GM12878 (cell line): ENCODE measurements at regions of chr20 and their contacts with region 1.

Region 1: DNA sequence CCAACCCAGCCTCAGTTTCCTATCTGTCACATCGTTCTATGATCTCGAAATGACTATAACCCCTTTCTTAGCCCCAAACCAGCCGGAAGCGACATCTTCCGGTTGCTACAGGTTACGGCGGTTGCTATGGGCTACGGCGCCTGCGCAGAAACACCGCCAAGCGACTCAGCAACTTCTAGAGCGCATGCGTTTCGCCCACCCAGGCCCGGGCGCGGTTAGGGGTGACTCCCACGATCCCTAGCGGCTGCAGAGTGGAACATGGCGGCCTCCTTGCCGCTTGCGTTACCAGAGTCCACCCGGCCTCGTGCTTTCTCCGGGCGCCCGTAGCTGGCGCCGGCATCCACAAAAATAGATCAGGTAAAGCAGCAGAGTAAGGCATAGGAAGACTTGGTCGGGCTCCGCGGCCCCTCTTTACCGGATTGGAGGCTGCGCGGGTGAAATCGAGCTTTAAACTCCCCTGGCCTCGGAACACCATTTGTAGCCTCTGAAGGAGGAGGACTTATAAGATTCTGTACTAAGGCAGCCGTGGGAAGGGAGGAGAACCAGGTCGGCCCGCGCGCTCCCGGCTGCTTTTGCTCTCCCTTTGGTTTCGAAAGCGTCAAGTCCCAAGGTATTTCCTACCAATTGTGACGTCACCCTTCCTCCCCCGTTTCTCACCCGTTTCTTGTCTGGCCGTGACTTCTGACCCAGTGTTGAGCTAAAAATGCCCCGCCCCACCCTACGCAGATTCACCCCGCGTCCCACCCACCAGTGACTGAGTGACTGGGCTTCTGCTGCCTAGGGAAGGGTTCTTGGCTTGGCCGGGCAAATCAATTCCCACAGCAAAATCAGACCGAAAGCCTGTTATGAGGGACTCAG is 3.5 kb downstream of the SDCBP2 start:
- DNase-seq: peak; percentile 88
- ATAC-seq: peak; percentile 89
- H3K4me3 ChIP-seq: peak overlapping the region; percentile 90
- H3K27ac ChIP-seq: peak overlapping the region; percentile 94
- H3K4me1 ChIP-seq: peaks cover 34% of the 10 kb centered on the region
- H3K27me3 ChIP-seq: no peaks in the 10 kb centered on the region
- CTCF ChIP-seq: no peak
- EP300 ChIP-seq: peak in 1 of 2 experiments; percentile 74; a peak in 1 of 4 replicates
- POLR2A ChIP-seq: peak; percentile 97
- RAD21 ChIP-seq: no peak

Region 2: GRCh38 chr20:1255675-1256074 is 69.7 kb before region 1 on chr20:
- CTCF ChIA-PET with region 1: no interaction called
- POLR2A ChIA-PET with region 1: no interaction called
- RAD21 ChIA-PET with region 1: no interaction called
- SMC1A ChIA-PET with region 1: no interaction called
- in situ Hi-C with region 1: no loop called
- intact Hi-C with region 1: no loop called
- DNase-seq: no peak
- ATAC-seq: no peak
- H3K4me3 ChIP-seq: no peak overlapping the region
- H3K27ac ChIP-seq: no peak overlapping the region
- H3K4me1 ChIP-seq: no peaks in the 10 kb centered on the region
- H3K27me3 ChIP-seq: no peaks in the 10 kb centered on the region; a peak in 2 of 4 replicates
- CTCF ChIP-seq: no peak
- EP300 ChIP-seq: no peak
- POLR2A ChIP-seq: no peak
- RAD21 ChIP-seq: no peak

Region 3: GRCh38 chr20:1313236-1313964 is 12.0 kb before region 1 on chr20:
- CTCF ChIA-PET with region 1: interaction called, 5 read pairs
- POLR2A ChIA-PET with region 1: no interaction called
- RAD21 ChIA-PET with region 1: no interaction called
- SMC1A ChIA-PET with region 1: interaction called, 11 read pairs
- in situ Hi-C with region 1: no loop called
- intact Hi-C with region 1: no loop called
- DNase-seq: no peak
- ATAC-seq: peak; percentile 90
- H3K4me3 ChIP-seq: no peak overlapping the region
- H3K27ac ChIP-seq: no peak overlapping the region
- H3K4me1 ChIP-seq: peaks cover 6% of the 10 kb centered on the region; the same call in 1 of the 2 replicates
- H3K27me3 ChIP-seq: no peaks in the 10 kb centered on the region
- CTCF ChIP-seq: peak; percentile 87 to 92 (median 89)
- EP300 ChIP-seq: no peak
- POLR2A ChIP-seq: no peak
- RAD21 ChIP-seq: peak; percentile 95

Region 4: DNA sequence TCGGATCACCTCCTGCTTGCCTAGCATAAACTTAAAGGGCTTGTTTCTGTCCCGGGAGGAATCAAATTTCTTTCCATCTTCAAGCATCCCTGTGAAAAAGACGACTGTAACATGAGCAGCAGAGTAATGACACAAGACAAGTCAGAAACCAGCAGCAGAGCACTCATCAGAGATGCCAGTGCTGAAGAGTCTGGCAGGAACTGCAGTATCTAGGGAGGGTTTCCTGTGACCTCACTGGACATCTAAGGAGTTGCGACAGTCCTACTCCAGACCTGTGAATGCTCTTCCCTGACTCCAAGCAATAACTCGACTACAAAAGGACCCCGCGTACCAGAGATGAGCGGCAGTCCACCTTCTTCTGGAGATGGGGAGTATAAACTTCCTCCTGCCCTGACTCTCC is 50.1 kb after region 1 on chr20:
- CTCF ChIA-PET with region 1: interaction called, 4 read pairs
- POLR2A ChIA-PET with region 1: interaction called, 6 read pairs
- RAD21 ChIA-PET with region 1: interaction called, 12 read pairs
- SMC1A ChIA-PET with region 1: interaction called, 14 read pairs
- in situ Hi-C with region 1: no loop called
- intact Hi-C with region 1: loop called (anchors 2 kb)
- DNase-seq: no peak
- ATAC-seq: no peak
- H3K4me3 ChIP-seq: no peak overlapping the region
- H3K27ac ChIP-seq: peak overlapping the region; percentile 85
- H3K4me1 ChIP-seq: peaks cover 35% of the 10 kb centered on the region
- H3K27me3 ChIP-seq: no peaks in the 10 kb centered on the region
- CTCF ChIP-seq: no peak
- EP300 ChIP-seq: no peak
- POLR2A ChIP-seq: no peak
- RAD21 ChIP-seq: no peak

Region 5: GRCh38 chr20:1491281-1491840 is 166.0 kb after region 1 on chr20 and contains the start of gene SIRPB2:
- CTCF ChIA-PET with region 1: no interaction called
- POLR2A ChIA-PET with region 1: no interaction called
- RAD21 ChIA-PET with region 1: no interaction called
- SMC1A ChIA-PET with region 1: no interaction called
- in situ Hi-C with region 1: no loop called
- intact Hi-C with region 1: no loop called
- DNase-seq: no peak
- ATAC-seq: no peak
- H3K4me3 ChIP-seq: no peak within 1 kb of the TSS
- H3K27ac ChIP-seq: no peak within 1 kb of the TSS
- H3K4me1 ChIP-seq: no peaks in the 10 kb centered on the region; the same call in 1 of the 2 replicates
- H3K27me3 ChIP-seq: peaks cover 0 to 2% of the 10 kb centered on the region in 2 experiments; a peak in 1 of 4 replicates
- CTCF ChIP-seq: no peak
- EP300 ChIP-seq: no peak
- POLR2A ChIP-seq: no peak
- RAD21 ChIP-seq: no peak
- polyA plus RNA-seq, gene SIRPB2: not detected